ENCODE measurements at regions of chr11 and their contacts with region 1.

Region 1: GRCh38 chr11:60906132-60906972 is at the start of gene PRPF19:
- DNase-seq: peak; percentile 91 to 100 (median 98)

Region 2: GRCh38 chr11:60634126-60634525 is 272.2 kb before region 1 on chr11:
- intact Hi-C with region 1: no loop called
- DNase-seq: no peak

Region 3: DNA sequence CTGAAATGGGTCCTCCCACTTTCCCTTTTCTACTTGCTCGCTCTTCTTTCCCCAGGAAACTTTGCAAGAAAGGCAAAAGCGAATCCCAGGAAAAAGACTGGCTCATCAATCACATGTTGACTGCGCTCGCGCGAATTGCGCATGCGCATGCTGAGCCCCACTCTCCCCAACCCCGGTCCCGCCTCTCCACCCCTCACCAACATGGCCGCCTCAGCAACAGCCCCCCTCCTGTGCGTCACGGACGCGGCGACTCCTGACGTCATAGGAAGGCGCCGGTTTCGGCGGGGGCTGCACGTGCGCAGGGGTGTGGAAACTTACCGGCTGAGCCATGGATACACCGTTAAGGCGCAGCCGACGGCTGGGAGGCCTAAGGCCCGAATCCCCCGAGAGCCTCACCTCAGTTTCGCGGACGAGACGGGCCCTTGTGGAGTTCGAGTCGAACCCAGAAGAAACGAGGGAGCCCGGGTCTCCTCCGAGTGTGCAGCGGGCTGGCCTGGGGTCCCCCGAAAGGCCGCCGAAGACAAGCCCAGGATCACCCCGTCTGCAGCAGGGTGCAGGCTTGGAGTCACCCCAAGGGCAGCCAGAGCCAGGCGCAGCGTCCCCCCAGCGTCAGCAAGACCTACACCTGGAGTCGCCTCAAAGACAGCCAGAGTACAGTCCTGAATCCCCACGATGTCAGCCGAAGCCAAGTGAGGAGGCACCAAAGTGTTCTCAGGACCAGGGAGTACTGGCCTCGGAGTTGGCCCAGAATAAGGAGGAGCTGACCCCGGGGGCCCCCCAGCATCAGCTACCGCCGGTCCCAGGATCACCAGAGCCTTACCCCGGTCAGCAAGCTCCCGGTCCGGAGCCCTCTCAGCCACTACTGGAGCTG is 64.3 kb before region 1 on chr11 and contains the start of gene CCDC86:
- intact Hi-C with region 1: loop called (anchors 5 kb)
- DNase-seq: peak; percentile 92 to 98 (median 96)

Region 4: DNA sequence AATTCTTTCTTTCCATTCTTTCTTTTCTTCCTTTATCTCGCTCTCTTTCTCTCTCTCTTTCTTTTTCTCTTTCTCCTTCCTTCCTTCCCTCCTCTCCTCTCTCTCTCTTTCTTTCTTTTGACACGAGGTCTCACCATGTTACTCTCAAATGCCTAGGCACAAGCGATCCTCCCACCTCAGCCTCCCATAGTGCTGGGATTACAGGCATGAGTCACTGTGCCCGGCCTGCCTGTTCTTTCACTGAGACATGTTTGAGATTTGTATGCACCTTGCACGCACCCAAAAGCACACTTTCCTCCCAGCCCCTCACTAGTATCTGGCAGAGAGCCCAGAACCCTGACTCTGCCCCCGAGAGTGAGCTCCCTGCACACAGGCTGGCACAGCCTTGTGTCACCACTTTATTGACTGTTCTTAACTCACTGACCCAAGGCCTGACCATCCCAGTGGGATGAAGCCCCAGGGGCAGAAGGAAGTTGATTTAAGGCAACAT is 122.0 kb after region 1 on chr11:
- intact Hi-C with region 1: no loop called
- DNase-seq: peak in 35 of 42 donors; percentile 20 to 79 (median 47)

Region 5: GRCh38 chr11:61161190-61162091 is 255.1 kb after region 1 on chr11 and contains the start of gene VPS37C:
- intact Hi-C with region 1: loop called (anchors 5 kb)
- DNase-seq: peak; percentile 71 to 96 (median 91)

Measured in head of caudate nucleus (tissue), 42 donors.